BJ (cell line): ENCODE measurements at regions of chr7 and their contacts with region 1.

Region 1: GRCh38 chr7:100827330-100828227 is at the start of gene EPHB4:
- DNase-seq: peak; percentile 32
- H3K4me3 ChIP-seq: peak within 1 kb of the TSS; percentile 74
- H3K27me3 ChIP-seq: no peaks in the 10 kb centered on the region
- CTCF ChIP-seq: peak; percentile 67
- polyA plus RNA-seq, gene EPHB4: 23.8 and 30.5 TPM in 2 replicates

Region 2: DNA sequence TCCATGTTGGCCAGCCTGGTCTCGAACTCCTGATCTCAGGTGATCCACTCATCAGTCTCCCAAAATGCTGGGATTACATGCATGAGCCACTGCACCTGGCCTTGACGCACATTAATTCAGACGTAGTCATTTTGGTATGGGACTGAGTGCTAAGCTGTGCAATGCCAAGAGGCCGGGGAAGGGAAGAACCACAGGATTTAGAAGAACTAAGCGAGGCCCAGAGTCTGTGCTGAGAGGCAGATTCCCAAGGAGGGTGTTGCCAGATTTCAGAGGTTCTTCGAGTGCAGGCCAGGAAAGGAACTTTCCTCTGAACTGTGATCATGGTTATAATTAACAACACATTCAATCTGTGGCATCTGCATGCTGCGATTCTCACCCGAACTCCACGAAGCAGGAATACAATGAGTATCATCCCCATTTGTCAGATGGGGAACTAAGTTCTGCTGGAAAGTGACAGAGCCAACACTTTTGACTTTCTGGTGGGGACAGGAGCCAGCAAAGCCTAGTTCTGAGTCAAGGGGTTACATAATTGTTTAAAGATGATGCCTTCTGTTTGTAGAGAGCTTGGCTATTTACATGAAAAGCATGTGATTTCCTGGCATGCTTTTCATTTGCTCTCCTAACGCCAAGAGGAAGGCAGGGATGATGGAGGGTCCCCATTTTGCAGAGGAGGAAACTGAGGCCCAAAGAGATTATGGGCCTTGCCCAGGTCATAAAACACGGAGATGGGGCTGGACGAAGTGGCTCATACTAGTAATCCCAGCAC is 100.4 kb before region 1 on chr7:
- CTCF ChIA-PET with region 1: interaction called, 11 read pairs
- POLR2A ChIA-PET with region 1: no interaction called
- DNase-seq: peak; percentile 92
- H3K4me3 ChIP-seq: no peak overlapping the region
- H3K27me3 ChIP-seq: peaks cover 27% of the 10 kb centered on the region
- CTCF ChIP-seq: no peak

Region 3: DNA sequence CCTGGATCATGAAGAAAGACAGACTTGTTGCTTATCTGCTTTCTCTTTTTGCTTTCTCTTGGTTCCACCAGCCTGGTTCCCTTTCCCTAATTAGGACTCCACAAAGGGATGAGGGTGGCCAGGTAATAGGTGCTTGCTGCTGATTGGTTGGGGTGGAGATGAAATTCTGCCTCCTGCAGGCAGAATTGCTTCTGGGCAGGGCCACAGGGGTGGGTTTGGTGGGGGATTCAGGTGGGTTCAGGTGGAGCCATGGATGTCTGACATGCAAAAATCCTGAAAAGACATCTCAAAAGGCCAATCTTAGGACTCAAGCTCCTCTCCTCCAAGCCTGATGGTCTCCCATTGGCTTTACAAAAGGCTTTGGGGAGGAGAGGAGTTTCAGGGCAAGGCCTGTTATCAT is 93.5 kb after region 1 on chr7:
- CTCF ChIA-PET with region 1: no interaction called
- POLR2A ChIA-PET with region 1: no interaction called
- DNase-seq: no peak
- H3K4me3 ChIP-seq: no peak overlapping the region
- H3K27me3 ChIP-seq: peaks cover 3% of the 10 kb centered on the region; the same call in 1 of the 2 replicates
- CTCF ChIP-seq: no peak